Ascending aorta (tissue), 2 donors: ENCODE measurements at regions of chr15 and their contacts with region 1.

Region 1: DNA sequence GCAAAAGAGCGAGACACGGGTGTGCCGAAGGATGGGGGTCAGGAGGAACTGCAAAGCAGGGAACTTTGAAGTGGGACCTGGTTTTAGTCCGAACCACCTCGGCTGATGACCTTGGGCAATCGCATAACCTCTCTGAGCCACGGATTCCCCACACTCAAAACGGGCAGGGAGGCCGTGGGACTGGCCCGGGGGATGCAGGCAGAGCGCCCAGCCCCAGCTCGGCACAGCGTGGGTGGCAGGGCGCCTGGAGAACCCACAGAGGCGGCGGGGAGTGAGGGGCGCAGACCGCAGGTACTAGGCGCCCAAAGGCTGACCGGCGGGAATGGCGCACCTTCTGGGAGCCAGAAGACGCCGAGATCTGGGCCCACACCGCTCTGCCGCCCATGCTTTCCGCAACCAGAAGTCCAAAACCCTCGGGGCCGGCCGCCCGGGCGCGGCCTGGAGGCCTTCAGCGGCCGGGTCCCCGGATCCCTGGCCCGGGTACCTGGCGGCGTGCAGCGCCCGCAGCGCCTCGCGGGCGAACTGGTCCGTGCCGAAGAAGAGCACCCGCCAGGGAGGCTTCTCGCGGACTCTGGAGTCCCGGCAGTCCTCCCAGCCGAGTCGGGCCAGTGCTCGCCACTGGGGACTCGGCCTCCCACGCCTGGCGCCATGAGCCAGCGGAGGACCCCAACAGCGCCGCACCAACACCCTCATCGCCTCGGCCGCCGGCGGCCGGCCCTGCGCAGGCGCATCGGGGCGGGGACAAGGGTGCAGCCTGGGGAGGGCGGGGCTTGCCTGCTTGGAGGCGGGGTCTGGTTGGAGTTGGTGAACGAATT is at the start of gene MTFMT:
- DNase-seq: peak; percentile 62 to 95
- H3K4me3 ChIP-seq: peak within 1 kb of the TSS; percentile 79 to 97
- H3K27ac ChIP-seq: peak within 1 kb of the TSS; percentile 64 to 79
- H3K4me1 ChIP-seq: peaks cover 0 to 8% of the 10 kb centered on the region in 2 donors
- H3K27me3 ChIP-seq: no peaks in the 10 kb centered on the region
- CTCF ChIP-seq: peak in 1 of 3 experiments; percentile 15
- total RNA-seq, gene MTFMT: 54.7 TPM

Region 2: GRCh38 chr15:64731012-64731806 is 297.9 kb before region 1 on chr15:
- intact Hi-C with region 1: loop called (anchors 1 kb)
- DNase-seq: peak in 1 of 2 donors; percentile 91
- H3K4me3 ChIP-seq: no peak overlapping the region
- H3K27ac ChIP-seq: no peak overlapping the region
- H3K4me1 ChIP-seq: no peaks in the 10 kb centered on the region
- H3K27me3 ChIP-seq: no peaks in the 10 kb centered on the region
- CTCF ChIP-seq: peak; percentile 83 to 97 (median 89)

Region 3: DNA sequence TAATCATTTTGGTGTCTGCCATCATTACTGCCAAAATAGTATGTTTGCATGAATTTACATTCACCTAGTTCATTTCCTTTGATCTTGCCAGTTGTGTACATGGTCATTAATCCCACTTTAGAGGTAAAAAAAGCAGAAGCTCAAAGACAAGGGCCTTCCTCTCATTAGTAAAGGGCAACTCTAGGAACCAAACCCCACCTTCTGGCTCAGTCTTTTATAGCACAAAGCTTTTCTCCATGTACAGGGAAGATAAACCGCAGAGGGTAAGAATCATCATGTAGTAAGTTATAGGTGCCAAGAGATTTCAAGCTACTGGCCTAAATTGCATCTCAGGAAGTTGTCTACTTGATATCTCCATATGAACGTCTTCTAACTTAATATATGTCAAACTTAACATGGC is 20.1 kb before region 1 on chr15:
- intact Hi-C with region 1: no loop called
- DNase-seq: no peak
- H3K4me3 ChIP-seq: no peak overlapping the region
- H3K27ac ChIP-seq: no peak overlapping the region
- H3K4me1 ChIP-seq: no peaks in the 10 kb centered on the region
- H3K27me3 ChIP-seq: no peaks in the 10 kb centered on the region
- CTCF ChIP-seq: no peak

Region 4: DNA sequence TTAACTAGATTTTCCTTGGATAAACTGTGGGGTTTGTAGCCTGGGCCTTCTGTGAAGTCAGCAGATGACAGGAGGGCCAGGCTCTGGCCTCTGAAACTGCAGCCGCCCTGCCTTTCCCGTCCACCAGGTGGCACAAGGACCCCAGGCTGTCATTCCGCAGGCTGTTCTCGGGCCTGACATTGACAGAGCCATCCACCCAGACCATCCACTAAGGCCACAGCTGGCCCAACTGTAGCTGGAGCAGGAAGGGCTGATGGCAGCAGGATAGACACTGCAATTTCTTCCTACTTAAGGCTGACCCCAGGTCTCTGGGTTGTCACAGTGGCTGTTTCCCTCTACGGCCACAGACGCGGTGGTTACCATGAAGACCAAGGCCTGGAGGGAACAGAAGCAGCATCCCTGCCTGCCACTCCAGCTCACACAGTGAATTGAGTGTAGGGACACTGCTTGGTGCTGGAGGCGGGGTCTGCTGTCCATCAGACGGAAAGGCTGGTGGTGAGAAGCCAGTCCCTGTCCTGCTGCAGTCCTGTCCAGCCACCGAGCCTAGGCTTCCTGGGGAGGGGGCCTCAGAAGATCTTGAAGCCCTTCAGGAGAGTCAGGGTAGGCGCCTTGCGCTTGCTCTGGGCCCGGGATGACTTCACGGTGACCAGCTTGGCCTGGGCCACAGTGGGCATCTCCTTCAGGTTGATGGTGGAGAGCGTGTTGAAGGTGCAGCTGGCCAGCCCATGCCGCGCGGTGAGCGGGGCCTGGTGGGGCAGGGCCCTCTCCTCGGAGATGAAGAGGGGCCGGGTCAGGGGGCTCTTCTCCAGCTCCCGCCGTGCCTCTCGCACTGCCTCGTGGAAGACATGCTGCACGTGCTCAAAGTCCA is 25.4 kb after region 1 on chr15:
- intact Hi-C with region 1: loop called (anchors 2 kb)
- DNase-seq: peak in 1 of 2 donors; percentile 81
- H3K4me3 ChIP-seq: no peak overlapping the region
- H3K27ac ChIP-seq: peak overlapping the region; percentile 97
- H3K4me1 ChIP-seq: peaks cover 13 to 52% of the 10 kb centered on the region in 2 donors
- H3K27me3 ChIP-seq: no peaks in the 10 kb centered on the region
- CTCF ChIP-seq: peak; percentile 80 to 89 (median 87)

Region 5: GRCh38 chr15:65101411-65101890 is 72.3 kb after region 1 on chr15:
- intact Hi-C with region 1: loop called (anchors 1 kb)
- DNase-seq: peak in 1 of 2 donors; percentile 88
- H3K4me3 ChIP-seq: no peak overlapping the region
- H3K27ac ChIP-seq: no peak overlapping the region
- H3K4me1 ChIP-seq: peaks cover 4 to 8% of the 10 kb centered on the region in 2 donors
- H3K27me3 ChIP-seq: no peaks in the 10 kb centered on the region
- CTCF ChIP-seq: peak; percentile 76 to 91 (median 90)

Region 6: GRCh38 chr15:65146438-65146837 is 117.3 kb after region 1 on chr15:
- intact Hi-C with region 1: no loop called
- DNase-seq: no peak
- H3K4me3 ChIP-seq: no peak overlapping the region
- H3K27ac ChIP-seq: no peak overlapping the region
- H3K4me1 ChIP-seq: no peaks in the 10 kb centered on the region
- H3K27me3 ChIP-seq: no peaks in the 10 kb centered on the region
- CTCF ChIP-seq: no peak

Region 7: GRCh38 chr15:65184868-65185738 is 156.0 kb after region 1 on chr15 and contains the start of gene CLPX:
- intact Hi-C with region 1: loop called (anchors 5 kb)
- DNase-seq: peak; percentile 76 to 96
- H3K4me3 ChIP-seq: peak within 1 kb of the TSS; percentile 88 to 90
- H3K27ac ChIP-seq: peak within 1 kb of the TSS; percentile 94 to 95
- H3K4me1 ChIP-seq: peaks cover 4 to 18% of the 10 kb centered on the region in 2 donors
- H3K27me3 ChIP-seq: no peaks in the 10 kb centered on the region
- CTCF ChIP-seq: no peak
- total RNA-seq, gene CLPX: 13.7 TPM

Region 8: DNA sequence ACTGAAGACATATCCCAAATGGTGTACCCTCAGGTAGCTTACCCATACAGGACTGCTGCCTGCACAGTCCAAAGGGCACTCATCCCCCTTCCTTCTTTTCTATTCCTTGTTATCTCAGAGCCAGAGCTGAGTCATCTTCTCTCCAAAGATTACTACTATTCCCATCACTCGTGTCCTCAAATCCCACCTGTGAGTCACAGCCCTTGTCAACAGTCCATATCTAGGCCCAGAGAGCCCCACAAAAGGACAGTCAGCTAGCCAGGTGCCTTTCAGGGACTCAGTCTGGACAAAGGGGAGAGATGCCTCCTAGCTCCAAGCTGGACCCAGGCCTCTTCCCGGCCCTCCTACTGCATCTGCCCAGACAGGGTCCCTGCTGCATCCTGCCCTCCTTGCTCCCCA is 246.6 kb after region 1 on chr15:
- intact Hi-C with region 1: loop called (anchors 10 kb)
- DNase-seq: no peak
- H3K4me3 ChIP-seq: no peak overlapping the region
- H3K27ac ChIP-seq: no peak overlapping the region
- H3K4me1 ChIP-seq: no peaks in the 10 kb centered on the region
- H3K27me3 ChIP-seq: no peaks in the 10 kb centered on the region
- CTCF ChIP-seq: no peak

Region 9: GRCh38 chr15:65298731-65299130 is 269.6 kb after region 1 on chr15:
- intact Hi-C with region 1: loop called (anchors 5 kb)
- DNase-seq: no peak
- H3K4me3 ChIP-seq: no peak overlapping the region
- H3K27ac ChIP-seq: no peak overlapping the region
- H3K4me1 ChIP-seq: peaks cover 0 to 14% of the 10 kb centered on the region in 2 donors
- H3K27me3 ChIP-seq: no peaks in the 10 kb centered on the region
- CTCF ChIP-seq: no peak